Cardiac septum (tissue), 1 donor: ENCODE measurements at regions of chr1 and their contacts with region 1.

Region 1: DNA sequence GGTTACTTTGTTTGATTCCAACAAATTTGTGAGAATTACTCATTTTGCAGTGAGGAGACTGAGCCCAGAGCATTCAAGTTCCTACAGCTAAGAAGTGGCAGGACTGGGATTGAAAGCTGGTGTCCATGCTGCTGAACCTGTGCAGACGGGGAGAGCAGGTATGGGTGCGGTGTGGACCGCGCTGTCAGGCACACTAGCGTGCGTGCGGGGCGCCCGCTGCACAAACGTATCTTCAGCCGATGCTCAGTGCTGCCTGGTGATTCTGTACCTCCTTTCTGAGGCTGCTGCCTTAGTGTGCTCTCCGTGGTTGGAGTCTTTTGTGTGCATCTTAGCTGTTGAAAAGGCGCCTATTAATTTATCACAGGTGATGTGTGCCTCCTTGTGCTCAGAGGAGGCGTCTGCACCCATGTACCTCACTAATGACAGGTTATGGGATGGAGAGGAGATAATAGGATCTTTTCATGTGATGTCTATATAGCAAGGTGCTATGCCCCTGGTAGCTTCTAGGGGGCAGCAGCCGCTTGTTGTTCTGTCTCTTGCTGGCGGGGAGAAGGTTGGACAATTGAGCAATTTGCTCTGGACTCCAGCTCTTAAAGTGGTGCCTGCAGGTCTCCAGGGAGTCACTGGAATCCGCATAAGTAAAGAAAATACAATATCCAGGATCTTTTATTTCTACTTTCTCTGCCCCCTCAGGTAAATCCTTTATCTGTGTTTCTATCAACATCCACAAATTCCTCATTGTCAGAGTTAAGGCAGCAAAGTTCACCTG is 32.5 kb downstream of the PEX14 start:
- DNase-seq: no peak

Region 2: GRCh38 chr1:10459181-10459580 is 48.1 kb before region 1 on chr1:
- intact Hi-C with region 1: no loop called
- DNase-seq: no peak

Region 3: DNA sequence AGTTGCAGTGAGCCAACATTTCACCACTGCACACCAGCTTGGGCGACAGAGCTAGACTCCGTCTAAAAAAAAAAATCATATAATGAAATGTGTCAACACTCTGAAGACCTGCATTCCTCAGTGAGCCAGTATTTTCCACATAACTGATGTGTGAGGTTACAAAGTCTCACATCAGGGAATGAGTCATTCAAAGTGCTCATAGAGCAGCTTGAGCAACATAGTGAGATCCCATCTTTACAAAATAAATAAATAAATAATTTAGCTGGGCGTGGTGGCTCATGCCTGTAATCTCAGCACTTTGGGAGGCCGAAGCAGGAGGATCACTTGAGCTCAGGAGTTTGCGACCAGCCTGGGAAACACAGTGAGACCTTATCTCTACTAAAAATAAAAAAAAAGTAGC is 223.7 kb after region 1 on chr1:
- intact Hi-C with region 1: no loop called
- DNase-seq: no peak

Region 4: GRCh38 chr1:10941891-10942541 is 434.7 kb after region 1 on chr1:
- intact Hi-C with region 1: loop called (anchors 10 kb)
- DNase-seq: no peak

Region 5: GRCh38 chr1:11539850-11540772 is 1032.8 kb after region 1 on chr1:
- intact Hi-C with region 1: no loop called
- DNase-seq: no peak